ENCODE measurements at regions of chr11 and their contacts with region 1.

Region 1: DNA sequence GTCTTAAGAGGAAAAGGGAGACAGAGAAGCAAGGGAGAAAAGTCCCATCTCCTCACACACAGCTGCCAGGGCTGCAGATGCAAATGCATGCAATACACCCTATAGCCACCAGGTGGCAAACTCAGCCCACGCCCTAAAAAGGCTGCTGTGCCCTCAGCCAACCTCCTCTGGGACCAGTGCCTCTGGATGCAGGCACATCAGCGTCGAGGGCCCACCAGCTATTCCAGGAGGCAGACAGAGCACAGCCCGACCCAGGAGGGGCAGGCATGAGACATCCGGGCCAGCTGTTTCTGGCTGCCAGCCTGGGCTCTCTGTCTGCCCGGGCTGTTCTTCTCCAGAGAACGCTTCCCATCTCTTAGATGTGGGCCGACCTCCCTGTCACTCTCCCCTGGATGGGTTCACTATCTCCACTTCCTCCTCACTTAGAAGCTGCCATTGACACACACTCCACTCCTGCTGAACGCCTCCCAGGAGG is 39.7 kb downstream of the TPBGL start:
- DNase-seq: peak; percentile 86
- CTCF ChIP-seq: peak; percentile 94

Region 2: DNA sequence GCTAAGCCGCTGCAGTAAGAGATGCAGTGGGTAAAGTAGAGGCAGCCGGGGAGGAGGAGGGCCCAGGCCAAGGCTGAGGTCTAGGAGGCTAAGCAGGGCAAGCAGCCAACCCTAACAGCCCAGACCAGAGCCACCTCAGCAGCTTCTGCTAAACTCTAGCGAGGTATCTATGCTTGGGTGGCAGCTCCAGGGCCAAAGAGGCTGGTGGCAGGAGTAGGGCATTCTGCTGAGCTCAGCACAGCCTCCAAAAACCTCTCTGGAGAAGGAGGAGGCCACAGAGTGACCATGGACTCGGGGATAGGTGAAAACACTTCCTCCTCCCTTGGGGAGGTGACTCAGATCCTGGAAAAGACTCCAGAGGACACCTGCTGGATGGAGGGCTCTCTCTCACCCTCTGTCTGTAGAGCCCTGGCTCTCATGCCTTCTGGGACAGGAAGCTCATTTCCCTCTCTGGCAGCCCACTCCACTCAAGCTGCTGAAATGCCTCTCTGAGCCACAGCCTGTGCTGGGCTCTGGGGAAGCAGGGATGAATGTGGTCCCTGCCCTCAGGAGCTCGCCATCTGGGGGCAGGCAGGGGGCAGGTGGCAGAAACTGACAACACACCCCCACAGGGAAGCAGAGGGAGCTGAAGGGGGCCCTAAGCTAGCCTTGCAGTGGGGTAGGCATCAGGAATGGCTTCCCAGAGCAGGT is 56.2 kb before region 1 on chr11:
- CTCF ChIA-PET with region 1: no interaction called
- POLR2A ChIA-PET with region 1: no interaction called
- DNase-seq: no peak
- CTCF ChIP-seq: no peak

Region 3: DNA sequence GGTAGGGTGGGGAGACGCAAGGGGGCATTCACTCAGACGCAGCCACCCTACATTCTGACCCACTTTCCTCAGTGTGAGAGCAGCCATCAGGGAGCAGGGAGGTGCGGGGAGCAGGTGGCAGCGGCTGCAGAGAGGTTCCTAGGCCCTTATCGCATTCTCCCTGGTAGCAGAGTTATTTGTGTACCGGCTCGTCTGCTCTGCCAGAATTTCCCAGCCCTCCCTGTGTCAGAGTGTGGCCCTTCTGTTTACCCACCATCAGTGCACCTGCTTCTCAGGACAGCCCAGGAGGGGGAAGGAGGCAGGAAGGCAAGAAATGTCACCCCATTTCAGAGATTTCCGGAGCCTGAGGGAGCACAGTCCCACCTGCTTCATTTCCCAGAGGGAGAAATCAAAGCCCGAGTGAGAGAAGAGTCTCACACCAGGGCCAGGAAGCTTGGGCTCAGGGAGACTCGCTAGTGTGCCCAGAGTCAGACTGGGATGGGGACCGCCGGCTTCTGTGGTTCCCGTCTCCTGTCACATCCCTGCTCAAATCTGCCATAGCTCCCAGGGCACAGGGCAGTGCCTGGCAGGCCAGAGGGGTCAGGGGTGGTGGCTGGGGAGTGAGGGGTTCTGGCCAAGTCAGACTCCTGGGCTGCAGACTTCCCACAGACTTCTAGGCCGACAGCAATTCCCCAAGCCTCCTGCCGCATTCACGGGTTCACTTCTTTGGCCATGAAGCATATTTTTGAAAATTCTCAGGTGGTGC is 21.5 kb after region 1 on chr11:
- CTCF ChIA-PET with region 1: interaction called, 10 read pairs
- POLR2A ChIA-PET with region 1: no interaction called
- DNase-seq: no peak
- CTCF ChIP-seq: no peak